ENCODE measurements at regions of chr16 and their contacts with region 1.

Region 1: GRCh38 chr16:23114131-23114904 is 34.9 kb downstream of the USP31 start:
- DNase-seq: no peak

Region 2: GRCh38 chr16:21150375-21151001 is 1963.8 kb before region 1 on chr16 and contains the start of gene DNAH3:
- intact Hi-C with region 1: loop called in 1 of 2 experiments (anchors 5 kb)
- DNase-seq: no peak
- total RNA-seq, gene DNAH3: not detected

Region 3: DNA sequence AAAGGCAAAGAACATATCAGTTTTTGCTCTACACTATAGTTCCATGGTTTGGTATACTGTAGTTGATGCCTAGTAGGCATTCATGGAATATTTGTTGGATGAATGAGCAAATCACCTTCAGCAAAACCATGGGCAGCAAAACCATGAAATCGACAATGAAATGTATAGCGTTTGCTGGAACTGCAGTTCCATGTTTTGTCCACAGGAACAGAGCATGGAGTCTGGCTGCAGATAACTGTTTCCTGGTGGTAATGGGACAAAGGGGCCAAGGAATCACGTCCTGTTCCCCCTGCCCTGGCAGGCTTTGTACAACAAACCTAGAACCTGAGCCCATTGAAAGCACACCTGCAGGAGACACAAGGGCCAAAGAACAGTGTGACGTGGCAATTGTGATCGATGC is 66.2 kb before region 1 on chr16:
- intact Hi-C with region 1: no loop called
- DNase-seq: no peak

Measured in posterior vena cava (tissue), 2 donors.